ENCODE measurements at regions of chr11 and their contacts with region 1.

Region 1: GRCh38 chr11:118928108-118928870 is 2.6 kb upstream of the BCL9L start:
- DNase-seq: peak; percentile 94
- H3K4me3 Mint-ChIP-seq: peak overlapping the region; percentile 95
- H3K27ac Mint-ChIP-seq: peak overlapping the region; percentile 99
- H3K4me1 Mint-ChIP-seq: peaks cover 51% of the 10 kb centered on the region
- H3K27me3 Mint-ChIP-seq: peaks cover 4% of the 10 kb centered on the region

Region 2: DNA sequence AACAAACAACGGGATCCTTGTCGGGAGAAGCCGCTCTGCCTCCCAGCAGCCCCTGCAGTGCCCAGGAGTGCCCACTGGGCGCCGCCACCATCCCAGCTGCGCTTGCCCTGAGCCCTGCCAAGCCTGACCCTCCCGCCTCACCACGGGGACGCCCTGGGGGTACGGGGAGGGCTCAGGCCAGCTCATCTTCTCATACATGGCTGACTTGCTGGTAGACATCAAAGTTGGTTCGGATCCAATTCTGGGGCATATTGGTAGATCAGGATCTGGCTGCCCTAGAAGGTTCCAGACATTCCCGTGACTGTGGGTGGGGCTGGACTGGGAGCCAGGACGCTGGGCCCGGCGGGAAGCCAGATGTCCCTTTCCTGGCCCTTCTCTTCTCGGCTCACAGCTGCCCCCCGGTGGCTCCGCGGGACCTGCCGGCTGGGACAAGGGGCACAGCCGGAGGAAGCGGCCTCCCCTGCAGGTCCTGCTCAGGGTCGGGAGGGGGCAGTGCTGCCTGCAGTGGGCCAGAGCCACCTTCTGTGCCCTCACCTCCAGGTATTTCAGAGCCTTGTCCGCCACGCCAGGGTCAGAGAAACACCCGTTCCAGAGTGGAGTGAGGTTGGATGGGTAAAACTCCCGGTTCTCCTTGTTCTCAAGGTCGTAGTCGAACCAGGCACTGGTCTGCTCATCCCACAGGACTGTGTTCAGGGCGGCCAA is 238.3 kb before region 1 on chr11:
- CTCF ChIA-PET with region 1: interaction called, 16 read pairs
- DNase-seq: peak; percentile 92
- H3K4me3 Mint-ChIP-seq: peak overlapping the region; percentile 58
- H3K27ac Mint-ChIP-seq: peak overlapping the region; percentile 45
- H3K4me1 Mint-ChIP-seq: peaks cover 48% of the 10 kb centered on the region
- H3K27me3 Mint-ChIP-seq: peaks cover 40% of the 10 kb centered on the region

Region 3: GRCh38 chr11:118907051-118908042 is 20.9 kb before region 1 on chr11:
- CTCF ChIA-PET with region 1: interaction called, 232 read pairs
- DNase-seq: peak; percentile 91
- H3K4me3 Mint-ChIP-seq: no peak overlapping the region
- H3K27ac Mint-ChIP-seq: peak overlapping the region; percentile 68
- H3K4me1 Mint-ChIP-seq: peaks cover 50% of the 10 kb centered on the region
- H3K27me3 Mint-ChIP-seq: no peaks in the 10 kb centered on the region

Region 4: GRCh38 chr11:118939953-118940598 is 11.8 kb after region 1 on chr11:
- CTCF ChIA-PET with region 1: interaction called, 21 read pairs
- DNase-seq: peak; percentile 82
- H3K4me3 Mint-ChIP-seq: no peak overlapping the region
- H3K27ac Mint-ChIP-seq: peak overlapping the region; percentile 56
- H3K4me1 Mint-ChIP-seq: peaks cover 39% of the 10 kb centered on the region
- H3K27me3 Mint-ChIP-seq: peaks cover 35% of the 10 kb centered on the region

Measured in activated naive CD4-positive, alpha-beta T cell treated with anti-CD3 and anti-CD28 coated beads, Interleukin-2, amount 10 ng/mL, durations not matched to agents 7 days and 5 days (primary cell).